Dendritic cell treated with granulocyte-macrophage colony-stimulating factor and Interleukin-4, amounts not matched to agents 40 ng/mL and 50 ng/mL, for 4 days (primary cell): ENCODE measurements at regions of chr7 and their contacts with region 1.

Region 1: DNA sequence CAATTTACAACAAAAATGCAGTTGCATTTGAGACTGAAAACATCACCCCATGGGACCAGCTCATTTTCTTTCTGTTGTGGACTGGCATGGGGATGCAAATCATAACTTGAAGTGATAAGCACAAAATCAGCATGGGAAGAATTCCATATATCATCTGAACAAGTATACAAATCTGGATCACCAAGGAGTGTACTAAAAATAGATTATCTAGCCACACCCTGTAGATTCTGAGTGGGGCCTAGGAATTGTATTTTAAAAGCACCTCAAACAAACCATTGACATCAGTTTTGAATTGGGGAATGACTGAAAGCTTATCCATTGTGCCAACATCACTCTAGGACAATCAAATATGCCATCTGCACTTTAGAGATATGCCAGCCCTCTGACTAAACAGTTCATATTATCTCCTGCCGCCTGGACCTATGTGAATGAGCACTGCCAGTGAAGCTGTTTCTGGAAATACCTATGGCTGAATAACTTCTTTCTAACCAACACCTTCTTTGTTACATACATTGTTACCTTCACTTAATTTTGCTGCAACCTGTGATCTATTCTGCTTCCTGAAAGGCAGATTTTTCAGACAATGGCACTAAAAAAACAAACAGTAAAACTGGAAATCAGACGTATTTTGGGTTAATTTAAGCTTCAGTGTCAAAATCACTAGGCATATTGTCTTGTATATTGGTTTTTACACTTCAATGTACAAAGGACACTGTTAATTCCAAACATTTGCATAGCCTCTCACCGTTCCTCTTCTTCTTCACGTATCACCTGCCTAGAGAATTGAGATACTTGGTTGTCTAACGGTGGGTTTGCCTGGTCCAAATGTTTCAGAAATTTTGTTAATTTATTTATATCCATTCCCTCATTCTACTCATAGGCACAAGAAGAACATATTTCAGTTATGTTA is 42.4 kb upstream of the HGF start:
- H3K4me3 Mint-ChIP-seq: no peak overlapping the region
- H3K27ac Mint-ChIP-seq: no peak overlapping the region
- H3K4me1 Mint-ChIP-seq: peaks cover 13% of the 10 kb centered on the region
- H3K27me3 Mint-ChIP-seq: no peaks in the 10 kb centered on the region

Region 2: DNA sequence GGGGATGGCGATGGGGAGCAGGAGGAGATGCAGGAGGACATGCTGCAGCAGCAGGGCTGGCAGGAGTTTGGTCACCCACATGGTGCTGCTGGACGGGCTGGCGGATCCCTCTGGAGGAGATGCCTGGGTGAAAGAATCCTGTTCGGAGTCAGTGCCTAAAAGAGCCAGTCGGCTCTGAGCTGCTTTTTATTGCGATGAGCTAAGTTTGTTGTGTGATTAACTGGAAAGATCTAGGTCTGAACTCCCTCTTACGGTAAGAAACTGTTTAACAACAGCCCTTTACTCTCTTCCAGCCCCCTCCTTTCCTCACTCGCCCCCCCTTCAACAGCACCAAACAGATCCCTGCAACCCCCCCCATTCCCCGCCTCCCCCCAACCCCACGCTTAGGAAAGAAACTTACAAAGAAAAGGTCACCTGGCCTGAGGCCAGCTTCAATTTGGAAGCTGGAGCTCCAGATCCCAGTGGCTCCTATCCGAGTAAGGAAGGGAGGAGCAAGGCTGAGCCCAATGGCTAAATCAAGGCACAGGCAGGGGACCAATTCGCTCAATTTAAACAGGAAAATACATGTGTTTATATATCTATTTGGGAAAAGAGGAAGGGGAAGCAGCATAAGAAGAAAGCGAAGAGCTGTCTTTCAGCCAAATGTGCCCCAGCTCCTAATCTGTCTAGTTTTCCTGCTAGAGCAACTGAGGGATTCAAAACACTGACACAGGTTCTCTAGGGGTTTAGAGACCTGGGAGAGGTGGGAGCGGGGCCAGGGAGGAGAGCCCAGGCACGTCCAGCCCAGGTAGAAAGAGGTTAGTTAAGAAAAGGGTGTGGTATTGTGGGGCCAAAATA is 42.1 kb before region 1 on chr7 and contains the start of gene HGF:
- intact Hi-C with region 1: loop called (anchors 1 kb)
- H3K4me3 Mint-ChIP-seq: peak within 1 kb of the TSS; percentile 77
- H3K27ac Mint-ChIP-seq: peak within 1 kb of the TSS; percentile 93
- H3K4me1 Mint-ChIP-seq: peaks cover 56% of the 10 kb centered on the region
- H3K27me3 Mint-ChIP-seq: no peaks in the 10 kb centered on the region

Region 3: GRCh38 chr7:81833401-81833800 is 21.2 kb after region 1 on chr7:
- intact Hi-C with region 1: no loop called
- H3K4me3 Mint-ChIP-seq: no peak overlapping the region
- H3K27ac Mint-ChIP-seq: no peak overlapping the region
- H3K4me1 Mint-ChIP-seq: no peaks in the 10 kb centered on the region
- H3K27me3 Mint-ChIP-seq: no peaks in the 10 kb centered on the region

Region 4: GRCh38 chr7:81846398-81846797 is 34.2 kb after region 1 on chr7:
- intact Hi-C with region 1: loop called (anchors 5 kb)
- H3K4me3 Mint-ChIP-seq: peak overlapping the region; percentile 60
- H3K27ac Mint-ChIP-seq: peak overlapping the region; percentile 84
- H3K4me1 Mint-ChIP-seq: peaks cover 30% of the 10 kb centered on the region
- H3K27me3 Mint-ChIP-seq: no peaks in the 10 kb centered on the region

Region 5: DNA sequence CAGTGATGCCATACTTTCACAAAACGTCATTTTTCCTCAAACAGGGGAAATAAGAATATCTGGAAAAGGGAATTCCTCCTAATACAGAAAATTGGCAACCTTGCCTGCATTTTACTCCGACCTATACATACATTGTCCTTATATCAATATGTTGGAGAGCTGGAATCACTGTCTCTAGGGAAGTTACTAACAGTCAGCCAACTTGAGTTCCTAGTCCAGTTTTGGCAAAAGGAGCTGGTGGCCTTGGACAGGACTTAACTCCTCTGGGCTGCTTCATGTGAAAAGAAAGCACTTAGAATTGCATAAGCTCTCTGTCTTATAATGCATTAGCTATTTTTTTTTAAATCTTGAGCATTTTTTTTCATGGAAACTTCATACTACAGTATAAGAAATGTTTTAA is 131.8 kb after region 1 on chr7:
- intact Hi-C with region 1: no loop called
- H3K4me3 Mint-ChIP-seq: no peak overlapping the region
- H3K27ac Mint-ChIP-seq: no peak overlapping the region
- H3K4me1 Mint-ChIP-seq: no peaks in the 10 kb centered on the region
- H3K27me3 Mint-ChIP-seq: no peaks in the 10 kb centered on the region